Heart right ventricle (tissue), 16 donors: ENCODE measurements at regions of chr5 and their contacts with region 1.

Region 1: GRCh38 chr5:54492178-54492577 is 25.4 kb upstream of the SNX18 start:
- DNase-seq: no peak
- ATAC-seq: no peak
- H3K4me3 ChIP-seq: no peak overlapping the region
- H3K27ac ChIP-seq: no peak overlapping the region
- H3K4me1 ChIP-seq: peaks cover 0 to 5% (median 0%) of the 10 kb centered on the region in 9 donors
- H3K27me3 ChIP-seq: no peaks in the 10 kb centered on the region
- CTCF ChIP-seq: no peak

Region 2: DNA sequence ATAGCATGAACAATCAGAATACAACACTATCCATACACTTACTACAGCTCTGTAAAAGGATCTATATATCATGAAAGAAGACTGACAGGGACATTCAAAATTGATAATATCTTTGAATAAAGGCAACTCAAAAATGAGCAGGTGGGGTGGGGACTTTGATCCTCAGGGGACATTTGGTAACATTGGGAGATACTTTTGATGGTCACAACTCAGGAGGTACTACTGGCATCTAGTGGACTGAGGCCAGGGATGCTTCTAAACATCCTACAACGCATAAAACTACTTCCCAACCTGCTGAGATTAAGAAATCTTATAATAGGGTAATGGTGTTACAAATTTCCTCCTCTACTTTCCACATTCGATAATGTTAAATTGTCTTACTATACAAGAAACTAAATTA is 425.7 kb before region 1 on chr5:
- intact Hi-C with region 1: no loop called
- DNase-seq: no peak
- ATAC-seq: no peak
- H3K4me3 ChIP-seq: no peak overlapping the region
- H3K27ac ChIP-seq: no peak overlapping the region
- H3K4me1 ChIP-seq: peaks cover 0 to 27% (median 6%) of the 10 kb centered on the region in 9 donors
- H3K27me3 ChIP-seq: no peaks in the 10 kb centered on the region
- CTCF ChIP-seq: no peak

Region 3: DNA sequence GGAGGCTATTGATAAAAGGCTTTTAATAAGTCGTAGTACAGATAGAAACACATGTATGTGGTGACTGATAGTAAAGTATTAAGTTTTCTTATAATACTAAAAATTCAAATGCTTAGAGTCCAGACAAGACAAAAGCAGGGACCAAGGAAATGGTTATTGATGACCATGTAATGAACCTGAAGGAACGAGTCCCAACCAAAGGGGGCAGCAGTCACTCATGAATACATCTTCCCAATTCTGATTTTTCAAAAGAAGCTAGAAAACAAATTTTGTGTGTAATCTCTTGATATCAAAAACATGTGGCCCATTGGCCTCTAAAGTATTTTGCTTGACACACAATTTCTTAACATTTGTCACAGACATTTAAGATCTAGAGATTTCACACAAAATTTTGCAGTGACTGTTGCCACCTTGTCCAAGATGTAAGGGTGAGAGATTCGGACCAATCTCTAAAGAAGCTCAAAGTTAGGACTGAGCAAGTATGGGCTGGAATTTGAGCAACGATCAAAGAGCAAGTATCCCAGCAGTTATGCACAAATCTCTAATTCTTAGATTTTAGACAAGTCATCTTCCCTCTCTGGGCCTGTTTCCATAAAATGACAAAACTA is 248.6 kb before region 1 on chr5:
- intact Hi-C with region 1: loop called in 5 of 10 experiments (anchors 5 to 10 kb)
- DNase-seq: peak in 1 of 2 donors; percentile 21
- ATAC-seq: no peak
- H3K4me3 ChIP-seq: no peak overlapping the region
- H3K27ac ChIP-seq: no peak overlapping the region
- H3K4me1 ChIP-seq: peaks cover 0 to 70% (median 14%) of the 10 kb centered on the region in 9 donors
- H3K27me3 ChIP-seq: no peaks in the 10 kb centered on the region
- CTCF ChIP-seq: peak; percentile 29 to 81 (median 70)

Region 4: DNA sequence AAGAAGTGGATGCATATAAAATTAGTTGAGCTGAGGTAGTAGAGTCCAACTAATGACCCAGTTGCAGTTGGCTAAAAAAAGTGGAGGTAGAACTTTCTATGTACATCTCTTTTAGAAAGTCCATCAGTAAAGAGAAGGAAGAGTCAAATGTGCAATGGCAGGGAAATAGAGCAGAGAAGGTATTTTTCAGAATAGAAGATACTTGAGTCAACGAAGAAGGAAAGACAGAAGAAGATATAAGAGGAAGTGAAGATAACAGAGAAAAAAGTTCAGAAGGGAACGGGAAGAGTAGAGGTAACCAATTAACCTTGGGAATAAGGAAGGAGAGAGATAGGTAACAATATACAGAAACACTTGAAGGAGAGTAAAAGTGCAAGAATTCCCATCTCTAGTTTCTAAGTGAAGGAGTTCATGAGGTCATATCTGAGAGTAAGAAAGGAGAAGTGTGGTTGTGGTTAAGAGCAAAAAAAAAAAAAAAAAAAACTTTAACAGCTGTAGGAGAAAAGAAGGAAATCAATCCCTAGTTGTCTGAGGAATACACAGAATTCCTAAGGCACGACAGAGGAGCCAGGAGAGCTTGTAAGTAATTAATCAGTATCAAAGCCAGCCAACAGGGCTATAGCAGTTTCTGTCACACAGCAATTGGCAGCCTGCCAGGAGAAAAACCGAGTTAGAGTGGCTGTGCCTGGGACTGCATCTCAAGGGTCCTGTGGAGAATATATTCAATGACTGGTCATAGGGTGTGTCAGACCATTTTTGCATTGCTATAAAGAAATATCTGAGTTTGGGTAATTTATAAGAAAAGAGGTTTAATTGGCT is 242.8 kb before region 1 on chr5:
- intact Hi-C with region 1: loop called (anchors 2 to 10 kb)
- DNase-seq: peak; percentile 24 to 29
- ATAC-seq: peak in 3 of 8 donors; percentile 15 to 41 (median 25)
- H3K4me3 ChIP-seq: no peak overlapping the region
- H3K27ac ChIP-seq: peak overlapping the region in 1 of 10 donors; percentile 70
- H3K4me1 ChIP-seq: peaks cover 0 to 89% (median 30%) of the 10 kb centered on the region in 9 donors
- H3K27me3 ChIP-seq: no peaks in the 10 kb centered on the region
- CTCF ChIP-seq: no peak

Region 5: GRCh38 chr5:54254482-54255198 is 237.5 kb before region 1 on chr5:
- intact Hi-C with region 1: loop called in 9 of 10 experiments (anchors 2 to 10 kb)
- DNase-seq: peak in 1 of 2 donors; percentile 30
- ATAC-seq: peak; percentile 66 to 90 (median 86)
- H3K4me3 ChIP-seq: peak overlapping the region in 9 of 10 donors; percentile 4 to 46 (median 25)
- H3K27ac ChIP-seq: peak overlapping the region; percentile 20 to 75 (median 65)
- H3K4me1 ChIP-seq: peaks cover 0 to 82% (median 37%) of the 10 kb centered on the region in 9 donors
- H3K27me3 ChIP-seq: no peaks in the 10 kb centered on the region
- CTCF ChIP-seq: peak; percentile 15 to 70 (median 49)

Region 6: DNA sequence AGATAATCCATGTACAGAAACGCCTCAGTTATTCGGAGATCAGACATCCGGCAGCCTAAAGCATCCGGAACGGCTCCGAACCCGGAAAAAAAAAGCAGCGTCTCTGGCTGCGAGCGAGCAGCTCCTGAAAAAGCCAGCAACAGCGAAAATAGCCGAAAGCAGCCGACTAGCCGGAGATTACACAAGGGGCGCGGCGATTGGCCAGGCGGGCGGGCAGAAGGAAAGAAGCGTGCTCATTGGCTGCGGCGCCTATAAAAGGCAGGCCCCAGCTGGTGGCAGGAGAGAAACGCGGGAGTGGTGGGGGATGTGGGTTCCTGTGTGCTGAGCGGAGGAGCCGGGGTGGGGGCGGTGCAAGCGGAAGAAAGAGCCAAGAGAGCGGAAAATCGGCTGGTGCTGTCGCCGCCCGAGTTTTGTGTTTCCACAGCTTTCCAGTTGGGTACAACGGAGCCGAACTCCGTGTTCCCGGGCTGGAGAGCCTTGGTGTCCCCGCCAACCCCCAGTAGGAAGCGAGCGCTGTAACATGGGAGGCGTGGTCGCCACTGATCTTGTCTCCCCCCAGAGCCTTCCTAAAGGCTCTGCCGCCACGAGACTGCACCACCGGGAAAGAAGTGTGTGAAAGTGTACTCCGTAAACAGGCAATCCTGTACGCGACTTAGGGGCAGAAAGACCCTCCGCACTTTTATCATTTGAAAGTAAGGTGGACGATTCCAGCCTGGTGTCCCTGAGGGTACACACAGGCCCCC is 181.6 kb before region 1 on chr5 and contains the start of gene ARL15:
- intact Hi-C with region 1: loop called in 3 of 10 experiments (anchors 2 to 5 kb)
- DNase-seq: peak; percentile 98 to 99
- ATAC-seq: peak; percentile 97 to 99 (median 98)
- H3K4me3 ChIP-seq: peak within 1 kb of the TSS; percentile 73 to 96 (median 87)
- H3K27ac ChIP-seq: peak within 1 kb of the TSS; percentile 75 to 95 (median 90)
- H3K4me1 ChIP-seq: peaks cover 0 to 34% (median 25%) of the 10 kb centered on the region in 9 donors
- H3K27me3 ChIP-seq: no peaks in the 10 kb centered on the region
- CTCF ChIP-seq: no peak
- total RNA-seq, gene ARL15: 22.6 to 31.8 (median 28.7) TPM

Region 7: GRCh38 chr5:54425258-54425657 is 66.9 kb before region 1 on chr5:
- intact Hi-C with region 1: loop called in 2 of 10 experiments (anchors 5 to 10 kb)
- DNase-seq: no peak
- ATAC-seq: no peak
- H3K4me3 ChIP-seq: no peak overlapping the region
- H3K27ac ChIP-seq: no peak overlapping the region
- H3K4me1 ChIP-seq: peaks cover 0 to 5% (median 0%) of the 10 kb centered on the region in 9 donors
- H3K27me3 ChIP-seq: no peaks in the 10 kb centered on the region
- CTCF ChIP-seq: no peak

Region 8: DNA sequence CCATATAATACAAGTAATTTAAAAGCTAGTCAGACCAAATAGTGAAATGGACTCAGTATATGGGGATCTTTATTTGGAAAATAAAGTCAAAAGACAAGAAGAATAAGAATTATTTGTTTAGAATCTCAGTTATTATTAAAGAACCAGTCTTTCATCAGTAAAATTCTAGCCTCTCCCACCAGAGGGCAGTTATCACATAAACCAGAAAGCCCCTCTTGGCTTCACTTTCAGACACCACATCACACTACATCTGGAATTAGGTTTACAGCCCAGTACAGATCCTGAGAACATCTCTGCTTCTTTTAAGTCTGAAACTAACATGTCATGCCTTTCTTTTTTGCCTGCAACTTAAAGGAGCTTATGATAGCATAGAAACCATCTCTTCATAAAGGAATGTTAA is 48.9 kb before region 1 on chr5:
- intact Hi-C with region 1: loop called in 4 of 10 experiments (anchors 5 to 10 kb)
- DNase-seq: peak in 1 of 2 donors; percentile 18
- ATAC-seq: no peak
- H3K4me3 ChIP-seq: no peak overlapping the region
- H3K27ac ChIP-seq: no peak overlapping the region
- H3K4me1 ChIP-seq: peaks cover 0 to 27% (median 14%) of the 10 kb centered on the region in 9 donors
- H3K27me3 ChIP-seq: no peaks in the 10 kb centered on the region
- CTCF ChIP-seq: peak in 8 of 9 donors; percentile 6 to 62 (median 48)

Region 9: GRCh38 chr5:54610197-54610944 is 118.2 kb after region 1 on chr5:
- intact Hi-C with region 1: no loop called
- DNase-seq: no peak
- ATAC-seq: peak in 6 of 8 donors; percentile 33 to 74 (median 56)
- H3K4me3 ChIP-seq: no peak overlapping the region
- H3K27ac ChIP-seq: peak overlapping the region in 1 of 10 donors; percentile 67
- H3K4me1 ChIP-seq: peaks cover 0 to 44% (median 0%) of the 10 kb centered on the region in 9 donors
- H3K27me3 ChIP-seq: no peaks in the 10 kb centered on the region
- CTCF ChIP-seq: no peak